GM12878 (cell line): ENCODE measurements at regions of chr4 and their contacts with region 1.

Region 1: GRCh38 chr4:168514249-168514852 is 17.5 kb downstream of the PALLD start:
- DNase-seq: no peak
- ATAC-seq: 0 out of 3 replicates have a peak, but pooled peaks have one; percentile 20
- H3K4me3 ChIP-seq: no peak overlapping the region
- H3K27ac ChIP-seq: no peak overlapping the region
- H3K4me1 ChIP-seq: no peaks in the 10 kb centered on the region
- H3K27me3 ChIP-seq: no peaks in the 10 kb centered on the region
- CTCF ChIP-seq: peak in 2 of 3 experiments; percentile 20 to 26; a peak in 2 of 6 replicates
- EP300 ChIP-seq: no peak
- POLR2A ChIP-seq: no peak
- RAD21 ChIP-seq: 0 out of 2 replicates have a peak, but pooled peaks have one; percentile 13

Region 2: DNA sequence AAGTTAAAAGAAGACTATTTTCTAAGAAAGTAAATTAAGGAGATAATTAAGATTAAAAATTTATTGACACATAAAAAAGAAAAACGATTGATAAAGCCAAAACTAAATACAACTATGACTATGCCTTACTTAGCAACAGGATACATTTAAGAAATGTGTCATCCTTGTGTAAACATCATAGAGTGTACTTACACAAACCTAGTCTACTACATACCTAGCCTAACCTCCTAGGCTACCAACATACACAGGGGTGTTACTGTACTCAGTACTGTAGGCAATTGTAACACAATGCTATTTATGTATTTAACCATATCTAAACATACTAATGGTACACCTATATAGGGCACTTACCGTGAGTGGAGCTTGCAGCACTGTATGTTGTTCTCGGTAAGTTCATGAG is 313.7 kb before region 1 on chr4:
- CTCF ChIA-PET with region 1: no interaction called
- POLR2A ChIA-PET with region 1: no interaction called
- RAD21 ChIA-PET with region 1: no interaction called
- SMC1A ChIA-PET with region 1: no interaction called
- in situ Hi-C with region 1: no loop called
- intact Hi-C with region 1: no loop called
- DNase-seq: no peak
- ATAC-seq: no peak
- H3K4me3 ChIP-seq: no peak overlapping the region
- H3K27ac ChIP-seq: no peak overlapping the region
- H3K4me1 ChIP-seq: no peaks in the 10 kb centered on the region
- H3K27me3 ChIP-seq: no peaks in the 10 kb centered on the region
- CTCF ChIP-seq: no peak
- EP300 ChIP-seq: no peak
- POLR2A ChIP-seq: no peak
- RAD21 ChIP-seq: no peak

Region 3: DNA sequence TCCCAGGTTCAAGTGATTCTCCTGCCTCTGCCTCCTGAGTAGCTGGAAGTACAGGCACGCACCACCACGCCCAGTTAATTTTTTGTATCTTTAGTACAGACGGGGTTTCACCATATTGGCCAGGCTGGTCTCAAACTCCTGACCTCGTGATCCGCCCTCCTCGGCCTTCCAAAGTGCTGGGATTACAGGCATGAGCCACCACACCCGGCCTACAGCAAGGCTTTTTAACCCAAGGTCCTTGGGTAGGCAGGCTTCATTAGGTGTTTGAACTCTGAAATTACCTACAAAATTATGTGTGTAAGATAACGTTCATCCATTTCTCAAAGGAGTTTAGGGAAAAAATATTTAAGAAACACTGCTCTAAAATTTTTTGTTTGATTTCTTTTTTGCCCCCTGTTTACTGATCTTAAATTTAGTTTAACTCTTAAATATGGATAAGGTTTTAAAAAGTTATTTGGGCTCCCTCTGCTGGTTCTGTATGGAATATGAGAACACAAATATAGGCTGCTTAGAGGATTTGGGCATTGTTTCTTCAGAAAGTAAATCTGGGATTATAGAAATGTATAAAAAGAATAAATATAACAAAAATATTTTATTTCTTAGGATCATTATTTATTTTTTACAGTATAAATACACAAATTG is 402.9 kb after region 1 on chr4:
- CTCF ChIA-PET with region 1: interaction called, 51 read pairs
- POLR2A ChIA-PET with region 1: no interaction called
- RAD21 ChIA-PET with region 1: interaction called, 12 read pairs
- SMC1A ChIA-PET with region 1: interaction called, 18 read pairs
- in situ Hi-C with region 1: loop called (anchors 5 kb)
- intact Hi-C with region 1: loop called (anchors 2 kb)
- DNase-seq: no peak
- ATAC-seq: peak; percentile 80
- H3K4me3 ChIP-seq: no peak overlapping the region
- H3K27ac ChIP-seq: no peak overlapping the region
- H3K4me1 ChIP-seq: no peaks in the 10 kb centered on the region
- H3K27me3 ChIP-seq: no peaks in the 10 kb centered on the region
- CTCF ChIP-seq: peak; percentile 37 to 52 (median 41); a peak in 4 of 6 replicates
- EP300 ChIP-seq: no peak
- POLR2A ChIP-seq: no peak
- RAD21 ChIP-seq: peak; percentile 69

Region 4: GRCh38 chr4:169010125-169011023 is 496.0 kb after region 1 on chr4 and contains the start of gene CBR4:
- CTCF ChIA-PET with region 1: interaction called, 4 read pairs
- POLR2A ChIA-PET with region 1: no interaction called
- RAD21 ChIA-PET with region 1: no interaction called
- SMC1A ChIA-PET with region 1: no interaction called
- in situ Hi-C with region 1: no loop called
- intact Hi-C with region 1: loop called (anchors 5 kb)
- DNase-seq: peak; percentile 94
- ATAC-seq: peak; percentile 96
- H3K4me3 ChIP-seq: peak within 1 kb of the TSS; percentile 86
- H3K27ac ChIP-seq: peak within 1 kb of the TSS; percentile 91
- H3K4me1 ChIP-seq: no peaks in the 10 kb centered on the region
- H3K27me3 ChIP-seq: no peaks in the 10 kb centered on the region
- CTCF ChIP-seq: peak; percentile 6 to 36 (median 35); a peak in 2 of 6 replicates
- EP300 ChIP-seq: no peak; a peak in 1 of 4 replicates
- POLR2A ChIP-seq: peak; percentile 86
- RAD21 ChIP-seq: 0 out of 2 replicates have a peak, but pooled peaks have one; percentile 11
- polyA plus RNA-seq, gene CBR4: 21.4 to 36.2 TPM